ENCODE measurements at regions of chr9 and their contacts with region 1.

Region 1: DNA sequence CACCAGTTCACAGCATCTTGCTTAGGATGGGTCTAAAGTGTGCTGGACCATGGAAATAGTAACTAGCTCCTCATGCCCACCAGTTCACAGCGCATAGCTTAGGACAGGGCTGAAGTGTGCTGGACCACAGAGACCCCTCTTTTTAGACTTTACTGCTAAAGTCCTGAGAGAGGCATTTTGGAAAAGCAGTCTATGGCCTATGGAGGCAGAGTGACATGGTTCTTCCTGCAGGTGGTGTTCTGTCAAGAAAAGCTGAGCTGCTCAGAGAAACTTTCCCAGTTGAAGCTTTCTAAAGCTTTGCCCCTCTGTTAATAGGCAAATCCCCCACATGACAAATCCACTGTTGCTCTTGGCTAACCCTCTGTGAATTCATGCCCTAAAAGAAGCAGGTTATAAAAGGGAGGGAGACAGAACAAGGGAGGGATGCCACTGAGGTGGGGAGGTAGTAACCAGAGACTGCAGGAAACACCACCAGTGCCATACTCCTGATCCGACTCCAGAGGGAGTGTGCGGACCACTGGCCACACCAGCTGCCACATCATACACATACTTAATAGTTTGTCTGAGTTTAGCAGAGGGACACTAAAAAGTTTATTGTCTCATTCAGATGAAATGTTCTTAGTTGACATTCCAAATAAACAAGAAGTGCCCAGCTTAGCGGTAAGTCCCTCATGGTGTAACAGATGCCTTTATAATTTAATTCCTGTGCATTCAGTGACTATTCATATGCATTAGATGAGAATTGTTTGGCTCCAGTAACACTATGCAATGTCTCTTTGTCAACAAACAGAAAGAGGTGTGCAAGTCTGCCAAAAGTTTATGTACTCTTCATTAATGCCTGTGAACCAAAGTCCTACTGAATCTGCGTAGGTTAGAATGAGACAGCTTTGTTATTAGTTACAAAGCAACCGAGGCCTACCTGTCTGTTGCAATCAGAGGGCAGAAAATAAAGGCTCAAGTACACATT is 236.2 kb upstream of the NFIL3 start:
- DNase-seq: no peak
- H3K4me3 ChIP-seq: no peak overlapping the region
- H3K27me3 ChIP-seq: peaks cover 5% of the 10 kb centered on the region
- CTCF ChIP-seq: peak; percentile 77

Region 2: GRCh38 chr9:90881648-90882047 is 778.2 kb before region 1 on chr9:
- CTCF ChIA-PET with region 1: no interaction called
- POLR2A ChIA-PET with region 1: no interaction called
- DNase-seq: no peak
- H3K4me3 ChIP-seq: no peak overlapping the region
- H3K27me3 ChIP-seq: peaks cover 2% of the 10 kb centered on the region; the same call in 1 of the 2 replicates
- CTCF ChIP-seq: no peak

Region 3: GRCh38 chr9:91727316-91727861 is 67.6 kb after region 1 on chr9:
- CTCF ChIA-PET with region 1: interaction called, 11 read pairs
- POLR2A ChIA-PET with region 1: no interaction called
- DNase-seq: no peak
- H3K4me3 ChIP-seq: no peak overlapping the region
- H3K27me3 ChIP-seq: 0 out of 2 replicates have a peak, but pooled peaks cover 1% of the 10 kb centered on the region
- CTCF ChIP-seq: peak; percentile 72

Measured in BJ (cell line).